ENCODE measurements at regions of chr5 and their contacts with region 1.

Region 1: DNA sequence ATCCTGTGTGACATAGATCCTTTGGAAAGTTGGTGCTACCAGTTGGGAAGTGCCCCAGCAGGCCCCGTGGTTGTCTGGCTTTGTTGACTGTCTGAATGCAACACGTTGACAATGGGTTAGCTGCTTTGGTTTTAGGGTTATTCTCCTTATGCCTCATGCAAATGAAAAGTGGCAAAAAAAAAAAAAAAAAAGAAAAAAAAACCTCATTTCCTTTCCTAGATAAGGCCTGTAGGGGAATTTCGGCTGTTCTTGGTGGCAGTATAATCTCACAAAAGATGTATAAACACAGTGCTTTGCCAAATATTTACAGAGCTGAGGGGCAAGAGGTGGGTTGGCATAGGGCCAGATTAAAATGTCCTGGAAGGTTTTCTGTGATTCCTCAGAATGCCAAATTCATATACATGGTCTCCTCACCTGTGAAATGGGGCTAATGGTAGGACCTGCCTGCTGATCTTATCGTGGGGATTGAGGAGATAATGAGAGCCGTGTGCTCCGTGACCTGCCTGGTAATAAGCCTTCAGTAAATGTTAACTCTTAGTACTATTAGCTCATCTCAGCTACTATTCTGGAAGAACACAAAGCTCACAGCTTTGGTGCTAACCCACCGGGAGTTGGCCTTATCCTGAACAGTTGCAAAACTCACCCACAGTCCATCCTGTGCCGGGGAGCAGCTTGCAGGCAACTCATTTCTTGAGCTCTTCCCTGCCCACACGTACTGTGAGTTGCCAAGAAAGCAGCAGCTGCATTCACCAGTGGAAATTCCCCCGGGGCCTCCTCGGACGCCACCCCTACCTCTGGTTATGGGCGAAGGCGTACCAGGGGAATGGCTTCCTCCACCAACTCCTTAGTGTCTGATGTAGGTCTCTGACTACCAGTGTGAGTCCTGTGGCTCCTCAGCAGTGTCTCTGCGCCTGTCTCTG is 220.3 kb downstream of the NR3C1 start:
- DNase-seq: peak; percentile 89
- H3K4me3 Mint-ChIP-seq: peak overlapping the region; percentile 57
- H3K27ac Mint-ChIP-seq: peak overlapping the region; percentile 90
- H3K4me1 Mint-ChIP-seq: peaks cover 56% of the 10 kb centered on the region
- H3K27me3 Mint-ChIP-seq: no peaks in the 10 kb centered on the region

Region 2: DNA sequence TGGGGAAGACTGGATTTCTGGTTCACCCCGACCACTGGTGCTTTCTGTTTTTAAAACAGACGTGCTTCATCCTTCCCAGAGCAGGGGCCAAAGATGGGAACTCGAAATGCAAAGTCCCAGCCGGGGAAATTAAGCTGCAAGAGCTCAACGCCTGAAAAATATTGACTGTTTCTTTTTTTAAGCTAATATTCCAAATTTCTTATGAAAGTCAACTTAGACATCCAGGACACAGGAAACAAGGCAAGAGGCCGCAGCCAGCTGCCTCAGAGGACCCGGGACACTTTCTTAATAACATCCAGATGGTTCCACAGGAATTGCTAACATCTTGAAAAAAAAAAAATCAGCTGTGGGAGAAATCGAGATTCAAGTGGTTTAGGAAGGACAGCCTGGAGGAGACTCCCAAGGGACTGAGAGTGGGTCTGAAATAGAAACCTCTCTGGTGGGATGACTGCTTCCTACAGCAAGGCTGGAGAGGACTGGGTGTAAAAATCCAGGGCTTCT is 642.2 kb before region 1 on chr5:
- CTCF ChIA-PET with region 1: no interaction called
- POLR2A ChIA-PET with region 1: no interaction called
- intact Hi-C with region 1: no loop called
- DNase-seq: no peak
- H3K4me3 Mint-ChIP-seq: no peak overlapping the region
- H3K27ac Mint-ChIP-seq: no peak overlapping the region
- H3K4me1 Mint-ChIP-seq: no peaks in the 10 kb centered on the region
- H3K27me3 Mint-ChIP-seq: no peaks in the 10 kb centered on the region

Region 3: GRCh38 chr5:143002459-143003328 is 180.5 kb before region 1 on chr5:
- CTCF ChIA-PET with region 1: interaction called, 7 read pairs
- POLR2A ChIA-PET with region 1: no interaction called
- intact Hi-C with region 1: loop called (anchors 10 kb)
- DNase-seq: peak; percentile 79
- H3K4me3 Mint-ChIP-seq: peak overlapping the region; percentile 52
- H3K27ac Mint-ChIP-seq: peak overlapping the region; percentile 91
- H3K4me1 Mint-ChIP-seq: peaks cover 56% of the 10 kb centered on the region
- H3K27me3 Mint-ChIP-seq: no peaks in the 10 kb centered on the region

Region 4: DNA sequence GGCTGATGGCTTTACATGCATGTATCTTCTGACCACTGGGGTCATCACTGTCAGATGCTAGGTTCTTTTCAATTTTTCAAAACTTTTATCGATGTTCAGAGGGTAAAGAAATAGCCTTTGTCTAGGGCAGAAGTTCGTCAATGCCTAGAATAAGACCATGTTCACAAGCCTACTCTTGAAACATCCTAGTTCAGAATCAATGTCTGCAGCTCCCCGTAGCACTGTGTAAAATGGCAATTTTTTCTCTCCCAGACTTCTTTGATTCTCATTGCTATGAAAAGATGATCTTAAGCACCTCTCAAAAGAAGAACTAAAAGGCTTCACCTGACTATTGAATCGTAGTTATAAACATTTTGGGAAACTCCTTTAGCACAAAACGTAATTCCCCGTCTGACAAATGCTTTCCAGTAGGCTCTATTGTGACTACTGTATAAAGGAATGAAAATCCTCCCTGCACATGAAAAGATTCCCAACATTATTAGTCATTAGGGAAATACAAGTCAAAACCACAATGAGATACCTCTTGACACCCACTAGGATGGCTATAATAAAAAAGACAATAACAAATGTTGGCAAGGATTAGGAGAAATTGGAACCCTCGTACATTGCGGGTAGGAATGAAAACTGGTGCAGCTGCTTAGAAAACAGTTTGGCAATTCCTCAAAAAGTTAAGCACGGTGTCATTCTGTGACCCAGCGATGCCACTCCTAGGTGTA is 149.5 kb before region 1 on chr5:
- CTCF ChIA-PET with region 1: no interaction called
- POLR2A ChIA-PET with region 1: no interaction called
- intact Hi-C with region 1: loop called (anchors 2 kb)
- DNase-seq: no peak
- H3K4me3 Mint-ChIP-seq: no peak overlapping the region
- H3K27ac Mint-ChIP-seq: no peak overlapping the region
- H3K4me1 Mint-ChIP-seq: peaks cover 58% of the 10 kb centered on the region
- H3K27me3 Mint-ChIP-seq: no peaks in the 10 kb centered on the region

Region 5: GRCh38 chr5:143101121-143101520 is 82.0 kb before region 1 on chr5:
- CTCF ChIA-PET with region 1: no interaction called
- POLR2A ChIA-PET with region 1: no interaction called
- intact Hi-C with region 1: loop called (anchors 1 kb)
- DNase-seq: peak; percentile 23
- H3K4me3 Mint-ChIP-seq: no peak overlapping the region
- H3K27ac Mint-ChIP-seq: peak overlapping the region; percentile 90
- H3K4me1 Mint-ChIP-seq: peaks cover 40% of the 10 kb centered on the region
- H3K27me3 Mint-ChIP-seq: no peaks in the 10 kb centered on the region

Region 6: GRCh38 chr5:143168171-143168741 is 14.9 kb before region 1 on chr5:
- CTCF ChIA-PET with region 1: no interaction called
- POLR2A ChIA-PET with region 1: no interaction called
- intact Hi-C with region 1: no loop called
- DNase-seq: no peak
- H3K4me3 Mint-ChIP-seq: no peak overlapping the region
- H3K27ac Mint-ChIP-seq: no peak overlapping the region
- H3K4me1 Mint-ChIP-seq: no peaks in the 10 kb centered on the region
- H3K27me3 Mint-ChIP-seq: no peaks in the 10 kb centered on the region

Region 7: GRCh38 chr5:143196601-143197259 is 13.6 kb after region 1 on chr5:
- CTCF ChIA-PET with region 1: interaction called, 6 read pairs
- POLR2A ChIA-PET with region 1: no interaction called
- intact Hi-C with region 1: loop called (anchors 1 kb)
- DNase-seq: no peak
- H3K4me3 Mint-ChIP-seq: peak overlapping the region; percentile 14
- H3K27ac Mint-ChIP-seq: no peak overlapping the region
- H3K4me1 Mint-ChIP-seq: peaks cover 17% of the 10 kb centered on the region
- H3K27me3 Mint-ChIP-seq: no peaks in the 10 kb centered on the region

Region 8: GRCh38 chr5:143213851-143214363 is 30.7 kb after region 1 on chr5:
- CTCF ChIA-PET with region 1: no interaction called
- POLR2A ChIA-PET with region 1: interaction called, 3 read pairs
- intact Hi-C with region 1: loop called (anchors 1 kb)
- DNase-seq: peak; percentile 63
- H3K4me3 Mint-ChIP-seq: no peak overlapping the region
- H3K27ac Mint-ChIP-seq: peak overlapping the region; percentile 79
- H3K4me1 Mint-ChIP-seq: peaks cover 57% of the 10 kb centered on the region
- H3K27me3 Mint-ChIP-seq: no peaks in the 10 kb centered on the region

Region 9: GRCh38 chr5:143605403-143606005 is 422.3 kb after region 1 on chr5:
- CTCF ChIA-PET with region 1: no interaction called
- POLR2A ChIA-PET with region 1: no interaction called
- intact Hi-C with region 1: loop called (anchors 10 kb)
- DNase-seq: peak; percentile 52
- H3K4me3 Mint-ChIP-seq: peak overlapping the region; percentile 28
- H3K27ac Mint-ChIP-seq: peak overlapping the region; percentile 86
- H3K4me1 Mint-ChIP-seq: peaks cover 34% of the 10 kb centered on the region
- H3K27me3 Mint-ChIP-seq: peaks cover 3% of the 10 kb centered on the region

Measured in activated CD4-positive, alpha-beta memory T cell treated with anti-CD3 and anti-CD28 coated beads for 36 hours (primary cell).